PC-9 (cell line): ENCODE measurements at regions of chr5 and their contacts with region 1.

Region 1: DNA sequence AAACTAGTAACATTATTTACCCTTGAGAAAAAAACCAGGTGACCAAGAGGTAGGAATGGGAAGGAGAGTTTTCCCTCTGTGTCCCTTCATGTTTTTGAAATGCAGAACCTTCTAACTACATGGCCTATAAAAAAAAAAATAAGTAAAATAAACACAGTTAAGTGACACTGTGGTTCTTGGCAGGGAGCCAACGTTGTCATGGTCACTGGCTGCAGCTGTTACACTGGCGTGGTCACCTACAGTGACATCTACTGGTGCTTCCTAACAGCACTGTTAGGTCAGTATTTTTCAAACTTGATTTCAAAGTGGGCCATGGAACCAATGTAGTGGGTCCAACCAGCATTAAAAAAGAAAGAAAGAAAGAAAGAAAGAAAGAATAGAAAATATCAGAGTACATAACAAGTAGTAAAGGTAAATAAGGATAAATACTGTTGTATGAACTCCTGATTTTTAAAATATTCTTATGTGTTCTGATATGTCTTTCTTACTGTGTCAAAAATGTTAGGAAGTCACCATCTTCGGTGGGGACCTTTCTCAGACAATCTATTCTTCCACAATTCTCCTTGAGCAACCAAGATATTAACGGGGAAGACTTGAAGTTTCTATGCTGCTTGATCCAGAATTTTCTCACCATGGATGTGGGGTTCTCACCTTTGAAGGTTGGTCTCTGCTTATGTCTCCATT is 59.1 kb upstream of the PJA2 start:
- DNase-seq: peak; percentile 78 to 82
- H3K4me3 ChIP-seq: no peak overlapping the region
- H3K27ac ChIP-seq: no peak overlapping the region
- H3K4me1 ChIP-seq: no peaks in the 10 kb centered on the region
- H3K27me3 ChIP-seq: no peaks in the 10 kb centered on the region
- CTCF ChIP-seq: peak; percentile 75

Region 2: DNA sequence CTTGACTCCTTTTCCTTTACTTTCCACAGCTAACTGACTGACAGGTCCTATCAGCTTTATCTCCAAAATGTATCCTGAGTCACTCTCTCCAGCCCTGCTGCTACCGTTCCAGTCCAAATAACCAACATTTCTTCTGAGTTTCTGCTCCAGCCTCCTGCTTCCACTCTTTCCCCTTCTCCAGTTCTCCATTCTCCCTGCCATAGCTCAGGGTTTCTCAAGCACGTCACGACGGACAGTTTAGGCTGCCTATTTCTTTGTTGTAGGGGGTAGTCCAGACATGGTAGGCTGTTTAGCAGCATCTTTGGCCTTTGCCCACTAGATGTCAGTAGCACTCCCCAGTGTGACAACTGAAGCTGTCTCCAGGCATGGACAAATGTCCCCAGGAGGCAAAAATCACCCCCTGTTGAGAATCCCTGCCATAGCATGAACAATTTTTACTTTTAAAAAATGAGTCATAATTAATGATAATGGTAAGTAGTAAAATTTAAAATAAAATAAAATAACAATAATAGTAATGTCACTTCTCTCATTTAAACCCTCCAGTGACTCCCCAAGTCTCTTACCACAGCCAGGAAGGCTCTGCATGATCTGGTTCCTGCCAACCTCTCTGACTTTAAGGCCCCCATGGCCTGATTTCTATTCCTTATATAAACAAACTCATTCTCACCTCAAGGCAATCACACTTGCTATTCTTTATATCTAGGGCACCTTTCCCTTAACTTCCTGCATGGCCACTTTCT is 826.5 kb before region 1 on chr5:
- CTCF ChIA-PET with region 1: no interaction called
- POLR2A ChIA-PET with region 1: no interaction called
- intact Hi-C with region 1: loop called (anchors 1 kb)
- DNase-seq: peak; percentile 55 to 57
- H3K4me3 ChIP-seq: peak overlapping the region; percentile 30; the same call in 1 of the 2 replicates
- H3K27ac ChIP-seq: no peak overlapping the region
- H3K4me1 ChIP-seq: peaks cover 6% of the 10 kb centered on the region; the same call in 1 of the 2 replicates
- H3K27me3 ChIP-seq: no peaks in the 10 kb centered on the region
- CTCF ChIP-seq: peak; percentile 88

Region 3: DNA sequence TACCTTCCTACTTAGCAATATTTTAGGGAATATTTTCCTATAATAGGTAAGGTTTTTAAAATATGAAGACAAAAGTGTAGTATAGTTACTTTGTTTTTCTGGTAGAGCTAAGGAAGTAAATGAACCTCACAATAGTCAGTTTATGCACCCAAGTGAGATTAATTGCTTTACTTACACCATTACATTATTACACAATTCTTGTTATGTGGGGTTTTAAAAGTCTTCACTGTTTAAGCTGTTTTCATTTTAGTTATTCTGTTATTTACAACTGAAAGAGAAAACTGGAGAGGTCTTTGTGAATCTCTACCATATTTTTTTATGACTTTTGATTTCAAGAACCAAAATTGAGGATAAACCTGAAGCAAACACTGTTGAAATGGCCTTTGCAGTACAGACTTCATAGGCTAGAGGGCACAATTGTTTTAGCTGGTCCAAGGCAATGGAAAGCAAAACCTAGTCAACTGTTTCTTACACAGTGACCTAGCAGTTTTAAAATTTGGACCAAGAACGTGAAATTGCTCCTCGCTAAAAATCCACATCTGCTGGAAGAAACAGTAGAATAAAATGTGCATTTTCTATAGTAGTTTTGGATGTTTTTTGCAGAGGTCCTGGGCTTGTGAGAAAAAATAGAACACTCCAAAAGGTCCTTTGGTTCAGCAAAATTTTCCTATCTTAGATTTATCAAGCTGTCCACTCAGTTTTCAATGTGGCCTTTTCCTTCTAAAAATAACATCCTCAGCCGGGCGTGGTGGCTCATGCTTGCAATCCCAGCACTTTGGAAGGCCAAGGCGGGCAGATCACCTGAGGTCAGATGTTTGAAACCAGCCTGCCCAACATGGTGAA is 787.6 kb before region 1 on chr5:
- CTCF ChIA-PET with region 1: no interaction called
- POLR2A ChIA-PET with region 1: no interaction called
- intact Hi-C with region 1: loop called (anchors 2 kb)
- DNase-seq: peak; percentile 33 to 47
- H3K4me3 ChIP-seq: no peak overlapping the region
- H3K27ac ChIP-seq: no peak overlapping the region
- H3K4me1 ChIP-seq: no peaks in the 10 kb centered on the region
- H3K27me3 ChIP-seq: no peaks in the 10 kb centered on the region
- CTCF ChIP-seq: peak; percentile 82

Region 4: DNA sequence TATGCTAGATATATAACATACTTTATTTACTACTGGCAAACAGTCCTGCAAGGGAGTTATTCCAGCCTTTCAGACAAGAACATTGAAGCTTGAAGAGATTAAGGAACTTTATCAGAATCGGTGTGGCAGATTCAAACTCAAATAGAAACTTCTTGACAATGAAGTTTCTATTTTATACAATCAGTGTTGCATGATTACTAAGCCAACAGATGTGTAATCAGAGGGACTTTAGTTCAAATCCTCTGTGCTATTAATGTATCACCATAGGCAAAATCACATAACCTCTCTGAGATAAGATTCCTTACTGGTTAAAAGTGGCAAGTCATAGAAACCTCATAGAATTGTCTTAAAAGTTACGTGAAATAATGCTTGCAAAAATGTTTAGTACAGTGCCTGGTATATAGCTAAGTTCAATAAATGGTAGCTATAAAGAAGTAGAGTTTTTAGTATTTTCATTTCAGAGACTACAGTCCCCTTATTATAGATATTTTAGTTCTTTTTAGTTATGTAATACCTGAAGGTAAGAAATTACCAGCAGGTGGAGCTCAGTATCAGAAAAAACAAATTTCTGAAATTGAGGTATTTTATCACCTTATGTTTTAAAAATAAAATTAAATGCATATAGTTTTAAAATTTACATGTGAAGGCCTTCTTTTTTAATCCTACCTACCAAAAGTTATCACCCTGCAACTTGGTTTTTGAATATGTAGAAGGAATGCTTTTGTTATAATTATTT is 549.1 kb before region 1 on chr5:
- CTCF ChIA-PET with region 1: no interaction called
- POLR2A ChIA-PET with region 1: interaction called, 16 read pairs
- intact Hi-C with region 1: loop called (anchors 10 kb)
- DNase-seq: no peak
- H3K4me3 ChIP-seq: no peak overlapping the region
- H3K27ac ChIP-seq: no peak overlapping the region
- H3K4me1 ChIP-seq: no peaks in the 10 kb centered on the region
- H3K27me3 ChIP-seq: no peaks in the 10 kb centered on the region
- CTCF ChIP-seq: peak; percentile 71

Region 5: GRCh38 chr5:109329333-109330237 is 139.3 kb before region 1 on chr5:
- CTCF ChIA-PET with region 1: no interaction called
- POLR2A ChIA-PET with region 1: no interaction called
- intact Hi-C with region 1: loop called (anchors 10 kb)
- DNase-seq: no peak
- H3K4me3 ChIP-seq: no peak overlapping the region
- H3K27ac ChIP-seq: no peak overlapping the region
- H3K4me1 ChIP-seq: no peaks in the 10 kb centered on the region
- H3K27me3 ChIP-seq: no peaks in the 10 kb centered on the region
- CTCF ChIP-seq: no peak

Region 6: GRCh38 chr5:109413458-109413857 is 55.4 kb before region 1 on chr5:
- CTCF ChIA-PET with region 1: no interaction called
- POLR2A ChIA-PET with region 1: no interaction called
- intact Hi-C with region 1: no loop called
- DNase-seq: no peak
- H3K4me3 ChIP-seq: no peak overlapping the region
- H3K27ac ChIP-seq: no peak overlapping the region
- H3K4me1 ChIP-seq: peaks cover 13% of the 10 kb centered on the region
- H3K27me3 ChIP-seq: no peaks in the 10 kb centered on the region
- CTCF ChIP-seq: no peak

Region 7: GRCh38 chr5:110561510-110561909 is 1092.6 kb after region 1 on chr5:
- CTCF ChIA-PET with region 1: no interaction called
- POLR2A ChIA-PET with region 1: no interaction called
- intact Hi-C with region 1: no loop called
- DNase-seq: no peak
- H3K4me3 ChIP-seq: no peak overlapping the region
- H3K27ac ChIP-seq: no peak overlapping the region
- H3K4me1 ChIP-seq: no peaks in the 10 kb centered on the region
- H3K27me3 ChIP-seq: no peaks in the 10 kb centered on the region
- CTCF ChIP-seq: no peak